HepG2 (cell line): ENCODE measurements at regions of chr5 and their contacts with region 1.

Region 1: DNA sequence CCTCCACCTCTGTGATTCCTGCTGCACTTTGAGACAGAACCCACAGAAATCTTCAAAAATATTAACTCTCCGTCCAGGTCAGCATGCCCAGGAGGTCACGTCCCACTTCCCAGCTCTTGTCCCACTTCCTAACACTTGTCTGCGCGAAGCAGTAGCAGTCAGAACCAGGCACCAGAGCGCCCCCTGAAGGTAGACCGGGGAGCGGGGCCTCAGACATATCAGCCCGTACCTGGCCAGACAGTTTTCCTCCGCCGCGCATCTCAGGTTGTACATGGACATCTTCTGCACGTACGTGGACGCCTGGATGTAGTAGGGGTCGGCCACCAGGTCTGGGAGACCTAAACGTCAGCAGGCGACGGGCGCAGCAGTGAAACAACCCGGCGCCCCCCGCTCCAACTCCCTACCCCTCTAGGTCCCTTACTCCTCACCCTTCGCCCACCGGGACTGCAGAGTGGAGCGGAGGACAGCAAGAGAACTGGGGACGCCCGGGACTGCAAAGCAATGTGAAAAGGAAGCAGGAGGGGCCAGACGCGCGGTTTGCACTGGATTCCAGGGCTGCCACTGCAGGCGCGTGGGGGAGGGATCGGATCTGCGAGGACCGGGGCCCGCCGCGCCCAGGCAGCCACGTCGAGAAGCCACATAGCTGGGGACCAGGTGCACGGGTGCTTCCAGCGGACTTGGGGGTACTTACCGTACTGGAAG is 1.2 kb downstream of the LOX start:
- DNase-seq: peak; percentile 70
- ATAC-seq: peak; percentile 84
- H3K4me3 ChIP-seq: peak overlapping the region; percentile 48 to 86 (median 74)
- H3K27ac ChIP-seq: peak overlapping the region; percentile 77
- H3K4me1 ChIP-seq: peaks cover 60% of the 10 kb centered on the region
- H3K27me3 ChIP-seq: peaks cover 0 to 7% of the 10 kb centered on the region in 2 experiments; a peak in 3 of 5 replicates
- CTCF ChIP-seq: peak; percentile 95
- EP300 ChIP-seq: no peak
- POLR2A ChIP-seq: no peak
- RAD21 ChIP-seq: peak; percentile 57

Region 2: DNA sequence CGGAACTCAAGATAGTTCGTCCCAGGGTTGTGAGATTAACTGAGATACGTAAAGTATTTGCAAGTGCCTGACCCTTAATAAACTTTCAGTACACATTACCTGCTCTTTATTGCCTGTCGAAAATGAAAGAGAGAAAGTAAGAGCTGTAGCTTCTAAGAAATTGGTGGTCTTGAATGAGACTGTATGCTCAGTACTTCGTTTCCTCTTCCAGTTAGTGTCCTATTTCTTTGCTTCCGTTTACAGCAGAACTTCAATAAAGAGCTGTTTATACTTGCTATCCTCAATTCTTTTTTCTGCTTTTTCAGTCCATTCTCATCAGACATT is 114.5 kb before region 1 on chr5:
- CTCF ChIA-PET with region 1: no interaction called
- POLR2A ChIA-PET with region 1: no interaction called
- in situ Hi-C with region 1: no loop called
- intact Hi-C with region 1: loop called (anchors 1 kb)
- DNase-seq: no peak
- ATAC-seq: peak; percentile 13; the same call in 1 of the 3 replicates
- H3K4me3 ChIP-seq: peak overlapping the region; percentile 74 to 80 (median 80)
- H3K27ac ChIP-seq: peak overlapping the region; percentile 73
- H3K4me1 ChIP-seq: peaks cover 11% of the 10 kb centered on the region
- H3K27me3 ChIP-seq: no peaks in the 10 kb centered on the region; a peak in 1 of 5 replicates
- CTCF ChIP-seq: no peak
- EP300 ChIP-seq: no peak
- POLR2A ChIP-seq: no peak
- RAD21 ChIP-seq: no peak

Region 3: DNA sequence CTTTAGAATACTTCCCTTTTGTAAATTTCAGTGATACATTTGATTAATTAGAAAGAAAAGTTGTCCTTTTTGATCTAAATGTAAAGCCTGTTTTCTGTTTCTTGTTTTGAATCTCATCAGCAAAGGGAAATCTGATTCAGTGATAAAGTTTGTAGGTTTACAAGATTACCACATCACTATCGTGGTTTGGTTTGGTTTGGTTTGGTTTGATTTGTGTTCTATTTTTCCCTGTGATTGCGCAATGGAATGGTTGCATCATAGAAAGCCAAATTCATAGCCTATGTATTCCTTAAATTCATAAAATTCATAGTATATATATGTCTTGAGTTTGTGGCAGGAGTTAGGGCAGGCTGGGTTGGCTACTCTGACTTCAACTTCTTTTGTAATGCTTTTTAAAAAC is 99.8 kb before region 1 on chr5:
- CTCF ChIA-PET with region 1: no interaction called
- POLR2A ChIA-PET with region 1: no interaction called
- in situ Hi-C with region 1: loop called (anchors 10 kb)
- intact Hi-C with region 1: no loop called
- DNase-seq: no peak
- ATAC-seq: no peak
- H3K4me3 ChIP-seq: no peak overlapping the region
- H3K27ac ChIP-seq: no peak overlapping the region
- H3K4me1 ChIP-seq: no peaks in the 10 kb centered on the region
- H3K27me3 ChIP-seq: no peaks in the 10 kb centered on the region
- CTCF ChIP-seq: no peak
- EP300 ChIP-seq: no peak
- POLR2A ChIP-seq: no peak
- RAD21 ChIP-seq: no peak

Region 4: GRCh38 chr5:122037750-122038149 is 39.1 kb before region 1 on chr5:
- CTCF ChIA-PET with region 1: no interaction called
- POLR2A ChIA-PET with region 1: no interaction called
- in situ Hi-C with region 1: no loop called
- intact Hi-C with region 1: loop called (anchors 2 kb)
- DNase-seq: no peak
- ATAC-seq: no peak
- H3K4me3 ChIP-seq: no peak overlapping the region
- H3K27ac ChIP-seq: no peak overlapping the region
- H3K4me1 ChIP-seq: peaks cover 34% of the 10 kb centered on the region
- H3K27me3 ChIP-seq: no peaks in the 10 kb centered on the region
- CTCF ChIP-seq: no peak
- EP300 ChIP-seq: no peak
- POLR2A ChIP-seq: no peak
- RAD21 ChIP-seq: no peak